Mammary epithelial cell (primary cell): ENCODE measurements at regions of chr11 and their contacts with region 1.

Region 1: DNA sequence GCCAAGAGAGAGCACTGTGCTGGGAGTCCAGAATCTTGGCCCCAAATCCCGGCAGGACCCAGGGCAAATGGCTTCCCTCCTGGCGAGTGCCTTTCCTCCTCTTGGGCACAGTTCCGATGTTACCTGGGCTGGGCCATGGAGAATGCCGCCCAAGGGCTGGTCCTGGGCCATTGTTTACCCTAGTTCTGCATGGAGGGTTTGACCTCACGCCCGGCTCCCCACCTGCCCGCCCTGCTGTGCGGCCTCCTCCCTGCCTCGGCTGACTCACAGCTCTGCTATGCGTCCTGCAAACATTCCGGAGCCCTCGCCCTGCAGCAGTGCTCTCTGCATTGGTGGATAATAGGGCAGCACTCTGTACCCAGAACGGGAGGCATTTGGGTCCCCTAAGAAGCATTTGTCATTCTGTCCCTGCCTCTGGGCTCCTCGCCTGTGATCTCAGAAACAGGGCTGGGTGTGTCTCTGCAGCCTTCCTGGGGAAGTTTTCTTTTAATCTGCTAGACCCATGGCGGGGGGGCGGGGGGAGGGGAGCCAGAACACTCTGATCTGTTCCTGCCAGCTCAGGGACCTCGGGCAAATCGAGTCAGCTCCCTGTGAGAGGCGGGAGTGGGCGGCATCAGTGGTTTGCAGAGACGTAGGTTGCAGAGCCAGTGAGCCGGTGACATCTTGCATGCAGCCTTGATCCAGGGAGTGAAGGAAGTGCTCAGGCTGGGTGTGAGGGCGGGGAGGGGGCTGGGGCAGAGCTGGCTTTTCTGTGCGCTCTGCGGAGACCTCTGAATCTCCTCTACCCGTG is 32.9 kb upstream of the SMIM38 start:
- DNase-seq: peak; percentile 85
- H3K4me3 ChIP-seq: peak overlapping the region in 2 of 3 experiments; percentile 9 to 15
- H3K27ac ChIP-seq: peak overlapping the region; percentile 53
- H3K4me1 ChIP-seq: peaks cover 33% of the 10 kb centered on the region
- H3K27me3 ChIP-seq: no peaks in the 10 kb centered on the region
- CTCF ChIP-seq: no peak

Region 2: DNA sequence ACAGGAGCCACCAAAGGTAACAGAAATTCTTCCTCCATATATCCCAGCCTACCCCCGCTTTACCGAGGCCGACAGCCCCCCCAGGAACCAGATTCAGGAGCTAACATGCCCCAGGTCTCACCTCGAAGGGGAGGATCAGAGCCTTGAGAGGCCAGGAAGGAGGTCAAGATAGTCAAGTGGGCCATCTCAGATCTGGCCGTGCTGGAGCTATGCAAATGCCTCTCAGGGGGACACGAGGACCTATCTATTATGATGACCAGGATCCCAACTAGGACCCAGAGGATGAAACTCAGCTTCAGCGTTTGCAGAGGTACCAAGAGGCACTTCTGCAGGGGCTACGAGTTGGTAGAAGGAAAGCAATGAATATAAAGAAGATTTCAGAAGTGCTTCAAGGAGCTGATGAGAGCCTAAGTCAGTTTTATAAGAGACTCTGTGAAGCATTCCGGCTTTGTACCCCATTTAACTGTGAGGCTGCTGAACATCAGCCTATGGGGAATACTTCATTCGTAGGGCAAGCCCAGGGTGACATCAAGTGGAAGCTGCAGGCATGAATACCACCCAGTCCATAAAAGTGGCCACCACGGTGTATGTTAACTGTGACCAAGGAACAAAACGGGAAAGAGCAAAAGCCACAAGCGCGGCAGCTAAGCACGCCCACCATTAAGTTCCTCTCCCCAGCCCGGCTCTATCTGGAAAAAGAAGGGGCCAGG is 253.4 kb before region 1 on chr11:
- CTCF ChIA-PET with region 1: no interaction called
- dilution Hi-C with region 1: no loop called
- in situ Hi-C with region 1: no loop called
- intact Hi-C with region 1: no loop called
- DNase-seq: no peak
- H3K4me3 ChIP-seq: no peak overlapping the region
- H3K27ac ChIP-seq: no peak overlapping the region
- H3K4me1 ChIP-seq: no peaks in the 10 kb centered on the region
- H3K27me3 ChIP-seq: peaks cover 3% of the 10 kb centered on the region
- CTCF ChIP-seq: no peak

Region 3: GRCh38 chr11:69280994-69281393 is 158.2 kb after region 1 on chr11:
- CTCF ChIA-PET with region 1: no interaction called
- dilution Hi-C with region 1: loop called (anchors 25 kb)
- in situ Hi-C with region 1: loop called in 1 of 2 experiments (anchors 10 kb)
- intact Hi-C with region 1: no loop called
- DNase-seq: peak; percentile 96
- H3K4me3 ChIP-seq: no peak overlapping the region
- H3K27ac ChIP-seq: peak overlapping the region; percentile 93
- H3K4me1 ChIP-seq: peaks cover 28% of the 10 kb centered on the region
- H3K27me3 ChIP-seq: no peaks in the 10 kb centered on the region
- CTCF ChIP-seq: no peak

Region 4: DNA sequence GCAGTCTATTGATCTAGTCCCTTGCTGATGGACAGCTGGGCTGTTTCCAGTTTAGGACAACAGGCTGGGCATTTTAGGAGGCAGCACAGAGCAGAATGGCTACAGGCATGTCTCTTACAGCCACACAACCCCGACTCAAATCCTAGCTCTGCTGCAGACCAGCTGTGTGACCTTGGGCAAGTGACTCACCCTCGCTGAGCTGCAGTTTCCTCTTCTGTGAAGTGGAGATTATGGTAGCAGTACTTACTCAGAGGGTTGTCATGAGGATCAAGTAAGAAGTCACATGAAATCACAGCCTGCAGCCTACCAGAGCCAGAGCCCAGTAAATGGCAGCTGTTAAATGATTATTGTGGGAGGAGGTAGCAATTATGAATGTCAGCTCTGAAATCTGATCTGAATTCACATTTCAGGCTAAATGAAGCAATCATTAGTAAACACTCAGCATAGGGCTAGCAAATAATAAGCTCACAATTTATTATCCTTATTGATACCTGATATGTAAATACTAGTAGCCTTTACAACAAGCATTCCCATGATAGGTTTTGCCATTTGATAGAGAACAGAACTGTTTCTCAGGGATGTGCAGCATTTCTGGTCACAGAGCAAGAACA is 230.0 kb after region 1 on chr11:
- CTCF ChIA-PET with region 1: no interaction called
- dilution Hi-C with region 1: no loop called
- in situ Hi-C with region 1: no loop called
- intact Hi-C with region 1: loop called (anchors 5 kb)
- DNase-seq: peak; percentile 93
- H3K4me3 ChIP-seq: no peak overlapping the region
- H3K27ac ChIP-seq: peak overlapping the region; percentile 26
- H3K4me1 ChIP-seq: peaks cover 35% of the 10 kb centered on the region
- H3K27me3 ChIP-seq: no peaks in the 10 kb centered on the region
- CTCF ChIP-seq: no peak